ENCODE measurements at regions of chr11 and their contacts with region 1.

Region 1: DNA sequence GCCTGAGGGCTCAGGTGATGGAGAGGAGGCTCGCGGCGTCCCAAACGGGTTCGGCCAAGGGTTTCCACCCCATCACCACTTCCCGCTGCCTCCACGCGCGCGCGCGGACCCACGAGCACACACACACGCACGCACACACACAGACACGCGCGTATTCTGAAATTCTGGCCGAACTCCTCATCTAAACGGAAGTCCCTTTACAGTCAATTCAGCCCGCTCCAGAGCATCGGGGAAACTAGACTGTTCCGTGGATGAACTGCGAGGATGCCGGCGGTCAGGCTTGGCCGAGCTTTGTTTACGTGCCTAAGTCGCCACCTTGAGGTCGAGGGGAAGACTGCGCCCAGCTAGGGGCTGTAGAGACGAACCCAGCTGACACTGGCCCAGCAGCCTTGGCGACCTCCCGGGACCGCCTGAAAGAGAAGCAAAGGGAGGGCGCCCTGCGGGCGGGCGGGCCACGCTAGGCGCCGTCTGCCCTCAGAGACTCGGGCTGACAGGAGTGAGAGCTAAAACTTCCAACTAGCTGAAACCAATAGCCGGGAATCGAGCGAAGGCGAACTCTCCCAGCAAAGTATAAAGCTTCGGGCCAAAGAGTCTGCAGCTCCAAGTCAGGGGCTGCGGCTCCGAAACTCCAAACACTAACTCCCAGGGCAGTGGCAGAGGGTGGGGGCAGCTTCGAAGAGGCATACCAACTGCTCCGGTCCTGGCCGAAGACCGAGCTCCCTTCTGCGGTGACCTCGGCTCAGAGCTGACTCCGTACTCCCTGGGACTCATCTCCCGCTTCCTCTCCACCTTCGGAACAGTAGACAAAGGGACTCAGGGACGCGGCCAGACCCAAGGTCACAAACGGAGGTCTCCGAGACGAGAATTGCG is 124.7 kb upstream of the C11orf58 start:
- DNase-seq: peak; percentile 77 to 84
- ATAC-seq: peak; percentile 97 to 98
- H3K4me3 ChIP-seq: peak overlapping the region; percentile 60 to 66 (median 64)
- H3K27ac ChIP-seq: peak overlapping the region; percentile 74 to 79 (median 77)
- H3K4me1 ChIP-seq: peaks cover 0 to 6% of the 10 kb centered on the region in 2 donors
- H3K27me3 ChIP-seq: peaks cover 0 to 10% (median 4%) of the 10 kb centered on the region in 3 donors
- CTCF ChIP-seq: peak; percentile 88 to 95 (median 94)
- POLR2A ChIP-seq: peak in 1 of 2 donors; percentile 52

Region 2: DNA sequence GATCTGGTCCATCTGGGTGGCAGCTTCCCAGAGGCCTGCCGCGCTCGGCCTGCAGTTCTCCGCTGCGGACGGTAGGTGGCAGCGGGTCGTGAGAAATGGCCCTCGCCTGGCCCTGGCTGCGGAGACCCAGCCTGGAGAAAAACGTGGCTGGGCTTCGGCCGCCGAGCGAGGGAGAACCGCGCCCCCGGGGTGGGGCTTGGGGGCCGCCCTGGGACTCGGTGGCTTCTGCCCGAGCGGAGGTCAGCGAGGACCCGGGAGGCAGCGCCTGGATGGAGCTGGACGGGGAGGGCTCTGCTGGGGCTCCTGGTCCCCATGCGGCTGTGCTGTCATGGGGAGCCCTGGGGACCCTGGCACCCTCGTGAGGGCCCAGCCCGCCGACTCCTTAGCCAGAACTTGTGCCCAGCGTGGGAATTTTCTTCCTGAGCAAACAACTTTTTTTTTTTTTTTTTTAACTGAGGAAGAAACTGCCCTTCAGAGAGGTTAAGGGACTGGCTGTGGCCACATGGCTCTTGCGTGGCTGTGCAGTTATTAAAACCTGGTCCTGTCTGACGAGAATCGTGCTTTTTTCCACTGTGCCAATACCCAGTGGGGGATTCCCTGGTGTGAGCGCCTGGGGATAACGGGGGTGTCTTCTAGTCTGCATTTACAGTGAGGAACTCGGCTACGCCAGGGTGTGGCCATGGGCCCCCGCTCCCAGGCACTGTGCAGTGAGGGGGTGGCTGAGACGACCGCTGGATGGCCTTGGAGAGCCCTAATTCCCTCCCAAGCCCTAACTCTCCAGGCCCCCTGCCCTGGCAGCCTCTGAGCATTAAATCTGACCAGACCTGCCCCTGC is 963.4 kb before region 1 on chr11:
- in situ Hi-C with region 1: loop called (anchors 10 to 25 kb)
- intact Hi-C with region 1: loop called (anchors 5 kb)
- DNase-seq: peak; percentile 79 to 83
- ATAC-seq: peak; percentile 92
- H3K4me3 ChIP-seq: peak overlapping the region; percentile 44 to 56 (median 50)
- H3K27ac ChIP-seq: peak overlapping the region; percentile 50 to 72 (median 61)
- H3K4me1 ChIP-seq: peaks cover 9 to 23% of the 10 kb centered on the region in 2 donors
- H3K27me3 ChIP-seq: no peaks in the 10 kb centered on the region
- CTCF ChIP-seq: peak; percentile 91 to 98 (median 96)
- POLR2A ChIP-seq: no peak

Region 3: GRCh38 chr11:15770798-15771414 is 842.8 kb before region 1 on chr11:
- in situ Hi-C with region 1: no loop called
- intact Hi-C with region 1: loop called (anchors 10 kb)
- DNase-seq: no peak
- ATAC-seq: no peak
- H3K4me3 ChIP-seq: no peak overlapping the region
- H3K27ac ChIP-seq: no peak overlapping the region
- H3K4me1 ChIP-seq: peaks cover 13 to 18% of the 10 kb centered on the region in 2 donors
- H3K27me3 ChIP-seq: no peaks in the 10 kb centered on the region
- CTCF ChIP-seq: peak; percentile 8 to 62 (median 34)
- POLR2A ChIP-seq: no peak

Region 4: DNA sequence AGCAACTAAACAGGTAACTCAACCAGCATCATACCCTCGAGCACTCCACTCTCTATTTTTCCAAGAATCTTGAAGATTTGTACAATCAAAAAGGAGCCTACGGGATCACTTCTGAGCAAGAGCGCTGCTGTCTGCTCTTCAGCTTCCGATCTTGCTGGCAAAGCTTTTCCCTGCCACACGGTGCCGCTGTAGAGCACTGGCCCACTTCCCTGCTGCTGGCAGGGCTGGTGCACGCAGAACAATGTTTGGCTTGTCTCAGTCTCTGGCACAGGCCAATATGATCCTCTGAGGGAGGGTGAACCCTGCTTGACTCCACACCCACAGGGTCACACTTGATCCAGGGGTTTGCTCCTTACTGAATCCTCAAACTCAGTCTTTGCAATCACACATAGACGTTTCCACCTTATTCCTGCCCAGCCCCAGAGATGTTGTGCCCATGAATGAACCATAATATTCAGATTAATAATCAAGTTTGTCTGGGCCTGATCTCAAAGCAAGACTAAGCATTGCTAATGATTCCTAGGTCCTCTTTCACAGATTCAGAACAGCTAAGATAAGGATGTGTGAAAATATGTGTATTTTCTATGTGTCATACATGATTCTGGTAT is 794.0 kb before region 1 on chr11:
- in situ Hi-C with region 1: loop called in 1 of 4 experiments (anchors 25 kb)
- intact Hi-C with region 1: loop called (anchors 10 kb)
- DNase-seq: peak; percentile 55 to 64
- ATAC-seq: peak; percentile 74 to 83
- H3K4me3 ChIP-seq: no peak overlapping the region
- H3K27ac ChIP-seq: no peak overlapping the region
- H3K4me1 ChIP-seq: peaks cover 33 to 46% of the 10 kb centered on the region in 2 donors
- H3K27me3 ChIP-seq: no peaks in the 10 kb centered on the region
- CTCF ChIP-seq: peak; percentile 66 to 95 (median 82)
- POLR2A ChIP-seq: no peak

Region 5: DNA sequence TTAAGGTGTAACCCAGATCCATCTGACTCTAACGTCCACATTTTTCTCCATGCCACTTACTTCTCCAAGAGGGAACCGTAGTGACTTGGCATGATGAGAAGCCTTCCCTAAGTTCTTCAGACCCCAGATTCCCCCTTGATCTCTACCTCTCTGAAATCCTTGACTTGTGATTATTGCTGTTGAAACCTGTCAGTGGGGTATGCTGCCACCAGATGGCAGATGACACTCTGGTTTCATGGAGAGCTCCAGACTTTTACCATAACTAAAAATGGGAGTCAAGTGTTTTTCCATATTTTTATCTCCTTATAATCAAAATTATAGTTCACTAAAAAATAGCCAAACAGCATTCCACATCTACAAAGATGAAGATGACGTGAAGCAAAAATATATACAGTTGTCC is 761.6 kb before region 1 on chr11:
- in situ Hi-C with region 1: no loop called
- intact Hi-C with region 1: loop called (anchors 1 kb)
- DNase-seq: peak; percentile 6 to 33
- ATAC-seq: peak in 1 of 2 donors; percentile 52
- H3K4me3 ChIP-seq: no peak overlapping the region
- H3K27ac ChIP-seq: no peak overlapping the region
- H3K4me1 ChIP-seq: peaks cover 7 to 13% of the 10 kb centered on the region in 2 donors
- H3K27me3 ChIP-seq: no peaks in the 10 kb centered on the region
- CTCF ChIP-seq: peak; percentile 34 to 65 (median 52)
- POLR2A ChIP-seq: no peak

Region 6: DNA sequence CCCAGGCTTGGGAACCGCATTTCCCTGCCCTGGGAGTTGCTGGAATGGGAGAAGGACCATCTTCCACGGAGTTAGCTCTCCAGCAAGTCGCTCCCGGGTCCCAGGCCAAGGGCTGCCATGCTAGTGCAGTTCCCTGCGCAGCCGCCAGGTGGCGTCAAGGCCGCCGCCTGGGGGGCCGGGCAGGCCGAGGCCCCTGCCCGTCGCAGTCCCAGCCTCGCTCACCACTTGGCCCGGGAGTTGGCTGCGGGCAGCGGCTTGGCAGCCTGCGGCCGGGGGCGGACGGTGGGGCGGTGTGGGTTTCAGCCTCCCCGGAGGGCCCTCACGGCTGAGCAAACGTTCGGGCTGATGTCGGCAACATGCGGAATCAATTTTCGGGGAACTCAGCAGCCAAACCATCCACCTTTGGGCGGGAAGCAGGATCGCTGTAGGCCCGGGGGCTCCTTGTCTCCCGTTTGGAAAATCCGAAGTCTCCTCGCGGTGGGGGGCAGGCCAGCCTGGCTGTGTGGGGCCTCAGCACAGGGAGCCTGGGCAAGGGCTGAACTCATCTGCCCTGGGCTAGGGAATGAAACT is 672.5 kb before region 1 on chr11:
- in situ Hi-C with region 1: loop called in 2 of 4 experiments (anchors 10 to 25 kb)
- intact Hi-C with region 1: loop called (anchors 1 kb)
- DNase-seq: peak in 1 of 2 donors; percentile 33
- ATAC-seq: peak; percentile 68 to 80
- H3K4me3 ChIP-seq: peak overlapping the region in 3 of 4 donors; percentile 9 to 45 (median 44)
- H3K27ac ChIP-seq: no peak overlapping the region
- H3K4me1 ChIP-seq: peaks cover 0 to 5% of the 10 kb centered on the region in 2 donors
- H3K27me3 ChIP-seq: no peaks in the 10 kb centered on the region
- CTCF ChIP-seq: peak; percentile 86 to 96 (median 95)
- POLR2A ChIP-seq: no peak

Region 7: GRCh38 chr11:16347928-16348685 is 265.6 kb before region 1 on chr11:
- in situ Hi-C with region 1: no loop called
- intact Hi-C with region 1: no loop called
- DNase-seq: peak; percentile 63 to 77
- ATAC-seq: peak; percentile 86 to 95
- H3K4me3 ChIP-seq: peak overlapping the region in 2 of 4 donors; percentile 5 to 21
- H3K27ac ChIP-seq: peak overlapping the region; percentile 82 to 89 (median 85)
- H3K4me1 ChIP-seq: peaks cover 33 to 44% of the 10 kb centered on the region in 2 donors
- H3K27me3 ChIP-seq: no peaks in the 10 kb centered on the region
- CTCF ChIP-seq: no peak
- POLR2A ChIP-seq: no peak

Region 8: DNA sequence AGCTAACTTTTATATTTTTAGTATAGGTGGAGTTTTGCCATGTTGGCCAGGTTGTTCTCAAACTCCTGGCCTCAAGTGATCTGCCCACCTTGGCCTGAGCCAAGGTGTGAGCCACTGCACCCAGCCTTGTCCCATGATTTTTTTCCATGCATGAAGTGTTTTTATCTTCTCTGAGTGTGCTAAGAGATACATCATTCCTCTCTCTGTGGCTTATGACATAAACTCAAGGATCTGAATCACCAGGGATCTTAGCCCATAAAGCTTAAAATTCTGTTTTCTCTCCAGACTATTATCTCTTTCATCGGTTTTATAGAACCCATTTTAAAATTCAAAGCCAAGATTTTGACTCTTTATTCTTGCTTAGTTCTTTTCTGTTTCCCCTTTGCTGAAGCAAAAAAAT is 76.3 kb after region 1 on chr11:
- in situ Hi-C with region 1: no loop called
- intact Hi-C with region 1: no loop called
- DNase-seq: no peak
- ATAC-seq: no peak
- H3K4me3 ChIP-seq: no peak overlapping the region
- H3K27ac ChIP-seq: no peak overlapping the region
- H3K4me1 ChIP-seq: no peaks in the 10 kb centered on the region
- H3K27me3 ChIP-seq: no peaks in the 10 kb centered on the region
- CTCF ChIP-seq: no peak
- POLR2A ChIP-seq: no peak

Measured in gastrocnemius medialis (tissue), 4 donors.